ENCODE measurements at regions of chr7 and their contacts with region 1.

Region 1: DNA sequence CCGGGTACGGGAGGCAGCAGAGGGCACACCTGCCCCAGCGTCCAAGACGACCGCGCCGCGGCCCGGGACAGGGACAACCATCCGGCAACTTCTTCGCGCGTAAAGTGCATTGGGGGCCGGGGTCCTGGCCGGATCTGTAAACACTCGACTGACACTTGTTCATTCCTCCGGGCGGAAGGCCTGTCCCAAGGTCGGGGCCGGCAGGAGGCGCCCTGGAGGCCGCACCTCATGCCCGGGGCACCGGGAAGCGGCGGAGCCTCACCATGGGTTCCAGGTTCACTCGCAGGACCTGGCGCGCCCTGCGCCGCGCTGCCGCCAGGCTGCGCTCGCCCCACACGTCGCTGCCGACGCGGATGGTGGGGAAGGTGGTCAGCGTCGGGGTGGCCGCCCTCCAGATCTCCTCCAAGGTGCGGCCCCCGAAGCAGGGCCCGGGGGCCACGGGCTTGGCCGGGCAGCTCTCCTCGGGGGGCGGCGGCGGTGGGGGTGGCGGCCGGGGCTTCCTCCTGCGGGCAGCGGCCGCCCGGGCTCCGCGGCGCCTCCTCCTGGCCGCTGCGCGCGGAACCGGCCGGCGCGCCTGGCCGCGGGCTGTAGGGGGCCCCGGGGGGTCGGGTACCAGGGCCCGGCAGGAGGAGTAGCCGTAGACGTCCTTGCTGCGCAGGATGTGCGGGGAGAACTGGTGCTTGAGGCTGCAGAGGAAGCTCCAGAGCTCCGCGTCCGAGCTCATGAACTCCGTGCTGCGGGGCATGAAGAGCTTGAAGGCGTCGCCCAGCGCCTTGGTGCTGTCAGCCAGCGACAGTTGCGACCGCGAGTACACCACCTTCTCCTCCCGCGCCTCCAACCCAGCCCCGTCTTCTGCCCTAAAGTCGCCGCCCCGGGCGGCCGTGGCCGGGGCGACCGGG is 746 bp downstream of the CCDC71L start:
- DNase-seq: peak; percentile 58 to 91 (median 72)
- ATAC-seq: peak; percentile 58
- H3K4me3 ChIP-seq: peak overlapping the region; percentile 71
- H3K4me3 Mint-ChIP-seq: peak overlapping the region; percentile 96
- H3K27ac ChIP-seq: peak overlapping the region; percentile 44 to 71
- H3K27ac Mint-ChIP-seq: peak overlapping the region; percentile 92
- H3K4me1 ChIP-seq: peaks cover 20% of the 10 kb centered on the region
- H3K4me1 Mint-ChIP-seq: peaks cover 40% of the 10 kb centered on the region
- H3K27me3 ChIP-seq: no peaks in the 10 kb centered on the region
- H3K27me3 Mint-ChIP-seq: no peaks in the 10 kb centered on the region
- CTCF ChIP-seq: peak; percentile 78

Region 2: DNA sequence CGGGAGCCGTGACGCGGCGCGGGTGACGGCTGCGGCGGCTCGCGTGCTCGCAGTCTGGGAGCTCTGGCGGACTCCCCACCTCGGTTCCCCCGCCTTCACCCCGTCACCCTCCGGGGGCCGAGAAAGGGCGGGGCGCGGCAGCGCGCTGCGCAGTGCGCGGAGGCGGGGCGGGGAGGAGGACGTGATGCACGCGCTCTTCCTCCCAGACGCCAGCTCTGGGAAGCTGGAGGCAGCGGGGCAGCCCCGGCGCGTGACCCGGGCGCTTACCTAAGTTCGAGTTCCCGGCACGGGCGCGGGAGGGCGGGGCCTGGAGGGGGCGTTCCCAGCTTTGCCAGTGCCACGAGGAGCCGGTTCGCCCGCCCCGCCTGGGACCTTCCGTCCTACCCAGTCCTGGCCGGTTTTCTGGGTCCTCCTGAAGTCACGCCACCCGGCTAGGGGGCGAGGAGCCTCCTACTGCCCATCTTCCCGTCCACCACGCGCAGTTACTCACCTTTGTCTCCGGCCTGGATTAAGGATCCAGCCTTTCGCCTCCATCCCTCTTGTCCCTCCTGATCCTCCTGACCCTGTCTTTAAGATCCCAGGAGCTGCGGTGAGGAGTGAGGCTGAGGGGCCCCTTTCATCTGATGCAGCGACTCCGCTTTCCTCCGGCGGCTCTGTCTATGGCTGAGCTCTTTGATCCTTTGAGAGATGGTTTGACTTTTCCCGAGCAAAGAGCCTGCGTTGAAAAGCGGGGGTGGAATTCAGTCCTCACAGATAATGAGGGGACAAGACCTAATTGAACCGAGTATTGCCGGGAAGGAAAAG is 375.0 kb before region 1 on chr7:
- CTCF ChIA-PET with region 1: no interaction called
- POLR2A ChIA-PET with region 1: interaction called, 3 read pairs
- intact Hi-C with region 1: loop called in 1 of 2 experiments (anchors 2 kb)
- DNase-seq: peak; percentile 92 to 100 (median 97)
- ATAC-seq: peak; percentile 88
- H3K4me3 ChIP-seq: peak overlapping the region; percentile 75
- H3K4me3 Mint-ChIP-seq: peak overlapping the region; percentile 99
- H3K27ac ChIP-seq: peak overlapping the region; percentile 84 to 91
- H3K27ac Mint-ChIP-seq: peak overlapping the region; percentile 94
- H3K4me1 ChIP-seq: peaks cover 9% of the 10 kb centered on the region
- H3K4me1 Mint-ChIP-seq: peaks cover 37% of the 10 kb centered on the region
- H3K27me3 ChIP-seq: no peaks in the 10 kb centered on the region
- H3K27me3 Mint-ChIP-seq: no peaks in the 10 kb centered on the region
- CTCF ChIP-seq: no peak

Region 3: GRCh38 chr7:106570948-106571418 is 89.2 kb before region 1 on chr7:
- CTCF ChIA-PET with region 1: no interaction called
- POLR2A ChIA-PET with region 1: no interaction called
- intact Hi-C with region 1: no loop called
- DNase-seq: no peak
- ATAC-seq: no peak
- H3K4me3 ChIP-seq: no peak overlapping the region
- H3K4me3 Mint-ChIP-seq: no peak overlapping the region
- H3K27ac ChIP-seq: no peak overlapping the region
- H3K27ac Mint-ChIP-seq: no peak overlapping the region
- H3K4me1 ChIP-seq: no peaks in the 10 kb centered on the region
- H3K4me1 Mint-ChIP-seq: no peaks in the 10 kb centered on the region
- H3K27me3 ChIP-seq: peaks cover 0 to 2% of the 10 kb centered on the region in 2 experiments
- H3K27me3 Mint-ChIP-seq: peaks cover 4% of the 10 kb centered on the region
- CTCF ChIP-seq: no peak

Region 4: DNA sequence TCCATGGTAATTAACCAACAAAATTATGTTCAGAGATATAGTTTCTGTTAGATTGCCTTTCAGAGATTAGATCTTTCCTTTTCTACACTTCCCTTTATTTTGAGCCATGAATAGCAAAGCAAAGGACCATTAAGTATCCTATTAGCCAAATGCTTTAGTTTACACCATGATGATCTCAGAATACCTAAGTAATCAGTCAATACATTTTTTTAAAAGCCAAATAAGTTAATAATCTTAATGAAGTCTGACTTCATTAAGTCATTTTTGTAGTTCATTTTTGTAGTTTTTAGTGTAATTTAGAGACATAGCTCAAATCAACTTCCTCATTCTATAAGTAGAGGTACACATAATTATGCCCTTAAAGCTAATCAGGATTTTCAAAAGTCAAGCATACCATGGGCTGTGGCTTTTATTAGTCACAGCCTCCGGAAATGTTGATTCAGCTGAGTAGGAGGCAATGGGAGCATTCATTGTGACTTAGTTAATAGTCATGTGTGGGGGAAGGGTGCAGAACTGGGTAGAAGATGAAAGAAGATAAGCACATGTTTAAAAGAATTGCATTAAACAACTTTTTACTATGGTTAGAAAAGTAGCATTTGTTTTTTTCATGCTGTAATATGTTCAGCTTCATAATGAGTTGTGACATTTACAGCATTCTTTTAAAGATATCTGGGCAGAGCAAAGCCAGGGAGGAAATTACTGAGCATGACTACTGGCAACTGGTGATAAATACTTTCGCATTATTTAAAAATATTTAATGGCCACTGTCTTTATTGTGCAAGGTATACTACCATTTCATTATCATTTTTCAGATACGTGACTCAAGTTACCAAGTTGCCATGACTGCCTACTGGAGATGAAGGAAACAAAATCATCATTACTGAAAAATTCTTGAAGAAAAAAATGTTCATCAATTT is 58.0 kb after region 1 on chr7:
- CTCF ChIA-PET with region 1: interaction called, 5 read pairs
- POLR2A ChIA-PET with region 1: interaction called, 16 read pairs
- intact Hi-C with region 1: no loop called
- DNase-seq: peak in 10 of 14 experiments; percentile 22 to 81 (median 42)
- ATAC-seq: peak; percentile 97
- H3K4me3 ChIP-seq: no peak overlapping the region
- H3K4me3 Mint-ChIP-seq: no peak overlapping the region
- H3K27ac ChIP-seq: no peak overlapping the region
- H3K27ac Mint-ChIP-seq: no peak overlapping the region
- H3K4me1 ChIP-seq: peaks cover 6% of the 10 kb centered on the region
- H3K4me1 Mint-ChIP-seq: no peaks in the 10 kb centered on the region
- H3K27me3 ChIP-seq: no peaks in the 10 kb centered on the region
- H3K27me3 Mint-ChIP-seq: no peaks in the 10 kb centered on the region
- CTCF ChIP-seq: no peak

Region 5: GRCh38 chr7:106736508-106737201 is 76.4 kb after region 1 on chr7:
- CTCF ChIA-PET with region 1: interaction called, 43 read pairs
- POLR2A ChIA-PET with region 1: interaction called, 16 read pairs
- intact Hi-C with region 1: loop called (anchors 1 kb)
- DNase-seq: peak in 10 of 14 experiments; percentile 7 to 80 (median 38)
- ATAC-seq: peak; percentile 91
- H3K4me3 ChIP-seq: no peak overlapping the region
- H3K4me3 Mint-ChIP-seq: peak overlapping the region; percentile 18
- H3K27ac ChIP-seq: no peak overlapping the region
- H3K27ac Mint-ChIP-seq: no peak overlapping the region
- H3K4me1 ChIP-seq: peaks cover 8% of the 10 kb centered on the region
- H3K4me1 Mint-ChIP-seq: peaks cover 17% of the 10 kb centered on the region
- H3K27me3 ChIP-seq: no peaks in the 10 kb centered on the region
- H3K27me3 Mint-ChIP-seq: no peaks in the 10 kb centered on the region
- CTCF ChIP-seq: peak; percentile 78

Region 6: GRCh38 chr7:107150375-107151073 is 490.3 kb after region 1 on chr7:
- CTCF ChIA-PET with region 1: no interaction called
- POLR2A ChIA-PET with region 1: no interaction called
- intact Hi-C with region 1: loop called in 1 of 2 experiments (anchors 10 kb)
- DNase-seq: peak; percentile 60 to 89 (median 76)
- ATAC-seq: peak; percentile 89
- H3K4me3 ChIP-seq: no peak overlapping the region
- H3K4me3 Mint-ChIP-seq: no peak overlapping the region
- H3K27ac ChIP-seq: no peak overlapping the region
- H3K27ac Mint-ChIP-seq: no peak overlapping the region
- H3K4me1 ChIP-seq: no peaks in the 10 kb centered on the region
- H3K4me1 Mint-ChIP-seq: peaks cover 6% of the 10 kb centered on the region
- H3K27me3 ChIP-seq: no peaks in the 10 kb centered on the region
- H3K27me3 Mint-ChIP-seq: no peaks in the 10 kb centered on the region
- CTCF ChIP-seq: peak; percentile 94

Region 7: DNA sequence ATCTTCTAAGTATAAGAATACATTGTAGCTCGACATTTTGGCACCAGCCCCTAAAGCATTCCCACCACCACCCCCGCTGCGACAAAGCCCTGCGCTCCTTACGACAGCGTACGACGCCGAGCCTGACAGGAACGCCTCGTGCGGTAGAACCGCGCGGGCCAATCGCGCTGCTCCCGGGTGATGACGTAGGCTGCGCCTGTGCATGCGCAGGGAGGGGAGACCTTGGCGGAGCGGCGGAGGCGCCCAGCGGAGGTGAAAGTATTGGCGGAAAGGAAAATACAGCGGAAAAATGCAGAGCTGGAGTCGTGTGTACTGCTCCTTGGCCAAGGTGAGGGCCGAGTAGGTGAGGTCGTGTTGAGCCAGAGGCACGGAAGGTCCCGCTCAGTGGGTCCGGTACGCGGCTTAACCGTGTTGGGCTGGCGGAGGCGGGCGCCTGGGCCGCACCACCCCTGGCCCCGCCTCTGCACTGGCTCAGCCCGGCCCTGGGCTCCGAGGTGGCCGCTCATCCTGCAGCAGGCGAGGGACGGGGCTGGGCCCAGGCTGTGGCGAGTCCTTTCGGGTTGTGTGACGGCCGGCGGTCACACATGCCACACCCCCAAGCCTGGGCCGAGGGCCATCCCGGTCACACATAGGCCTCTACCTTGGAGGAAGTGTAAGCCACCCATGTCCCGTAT is 1230.9 kb after region 1 on chr7 and contains the start of gene DLD:
- CTCF ChIA-PET with region 1: no interaction called
- POLR2A ChIA-PET with region 1: no interaction called
- intact Hi-C with region 1: loop called in 1 of 2 experiments (anchors 10 kb)
- DNase-seq: peak; percentile 84 to 97 (median 90)
- ATAC-seq: peak; percentile 96
- H3K4me3 ChIP-seq: peak within 1 kb of the TSS; percentile 78
- H3K4me3 Mint-ChIP-seq: peak within 1 kb of the TSS; percentile 99
- H3K27ac ChIP-seq: peak within 1 kb of the TSS; percentile 85 to 89
- H3K27ac Mint-ChIP-seq: peak within 1 kb of the TSS; percentile 95
- H3K4me1 ChIP-seq: peaks cover 27% of the 10 kb centered on the region
- H3K4me1 Mint-ChIP-seq: peaks cover 54% of the 10 kb centered on the region
- H3K27me3 ChIP-seq: no peaks in the 10 kb centered on the region
- H3K27me3 Mint-ChIP-seq: no peaks in the 10 kb centered on the region
- CTCF ChIP-seq: no peak
- total RNA-seq, gene DLD: 74.3 to 74.9 TPM

Measured in CD4-positive, alpha-beta T cell (primary cell).